GM12878 (cell line): ENCODE measurements at regions of chr16 and their contacts with region 1.

Region 1: DNA sequence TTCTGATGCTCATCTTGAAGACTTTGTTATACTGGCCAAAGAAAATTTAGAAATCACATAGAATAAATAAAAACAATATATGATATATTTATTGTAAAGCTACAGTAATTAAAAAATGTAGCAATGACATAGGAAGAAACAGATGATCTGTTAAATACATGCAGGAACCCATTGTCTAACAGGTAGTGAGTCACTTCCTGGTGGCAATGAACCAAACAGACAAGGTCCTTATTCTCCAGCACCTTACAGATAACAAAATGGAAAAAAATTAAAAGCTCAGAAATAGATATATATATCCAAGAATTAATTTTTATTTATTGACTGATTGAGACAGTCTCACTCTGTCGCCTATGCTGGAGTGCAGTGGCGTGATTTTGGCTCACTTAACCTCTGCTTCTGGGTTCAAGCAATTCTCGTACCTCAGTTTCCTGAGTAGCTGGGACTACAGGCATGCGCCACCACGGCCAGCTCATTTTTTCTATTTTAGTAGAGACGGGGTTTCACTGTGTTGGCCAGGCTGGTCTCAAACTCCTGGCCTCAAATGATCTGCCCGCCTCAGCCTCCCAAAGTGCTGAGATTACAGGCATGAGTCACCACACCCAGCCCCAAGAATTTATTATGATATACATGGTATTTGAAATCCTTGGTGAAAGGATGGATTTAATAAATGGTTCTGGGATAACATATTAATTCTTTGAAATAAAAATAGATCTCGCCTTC is 7.5 kb downstream of the NETO2 start:
- DNase-seq: no peak
- ATAC-seq: peak; percentile 51
- H3K4me3 ChIP-seq: no peak overlapping the region
- H3K27ac ChIP-seq: peak overlapping the region; percentile 32; the same call in 1 of the 2 replicates
- H3K4me1 ChIP-seq: peaks cover 10% of the 10 kb centered on the region
- H3K27me3 ChIP-seq: no peaks in the 10 kb centered on the region
- CTCF ChIP-seq: no peak
- EP300 ChIP-seq: no peak
- POLR2A ChIP-seq: no peak
- RAD21 ChIP-seq: no peak

Region 2: DNA sequence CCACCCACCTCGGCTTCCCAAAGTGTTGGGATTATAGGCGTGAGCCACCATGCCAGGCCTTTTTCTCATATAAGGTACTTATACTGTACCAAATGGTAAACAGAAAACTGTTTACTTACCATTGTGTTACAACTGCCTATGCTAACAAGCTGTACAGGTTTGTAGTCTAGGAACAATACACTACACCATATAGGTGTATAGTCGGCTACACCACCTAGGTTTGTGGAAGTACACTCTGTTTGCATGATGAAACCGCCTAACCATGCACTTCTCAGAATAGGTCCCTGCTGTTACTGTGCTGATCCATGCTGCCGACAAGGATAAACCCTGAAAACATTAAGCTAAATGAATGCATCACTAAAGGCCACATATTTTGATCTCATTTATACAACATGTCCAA is 181.7 kb before region 1 on chr16:
- CTCF ChIA-PET with region 1: interaction called, 20 read pairs
- POLR2A ChIA-PET with region 1: no interaction called
- RAD21 ChIA-PET with region 1: interaction called, 4 read pairs
- SMC1A ChIA-PET with region 1: interaction called, 6 read pairs
- in situ Hi-C with region 1: loop called (anchors 5 kb)
- intact Hi-C with region 1: no loop called
- DNase-seq: no peak
- ATAC-seq: peak; percentile 22; the same call in 2 of the 3 replicates
- H3K4me3 ChIP-seq: no peak overlapping the region
- H3K27ac ChIP-seq: no peak overlapping the region
- H3K4me1 ChIP-seq: no peaks in the 10 kb centered on the region
- H3K27me3 ChIP-seq: no peaks in the 10 kb centered on the region
- CTCF ChIP-seq: no peak
- EP300 ChIP-seq: no peak
- POLR2A ChIP-seq: no peak
- RAD21 ChIP-seq: no peak

Region 3: GRCh38 chr16:47045023-47045422 is 91.2 kb before region 1 on chr16:
- CTCF ChIA-PET with region 1: interaction called, 162 read pairs
- POLR2A ChIA-PET with region 1: interaction called, 7 read pairs
- RAD21 ChIA-PET with region 1: interaction called, 127 read pairs
- SMC1A ChIA-PET with region 1: interaction called, 101 read pairs
- in situ Hi-C with region 1: loop called (anchors 5 kb)
- intact Hi-C with region 1: no loop called
- DNase-seq: no peak
- ATAC-seq: no peak
- H3K4me3 ChIP-seq: no peak overlapping the region
- H3K27ac ChIP-seq: no peak overlapping the region
- H3K4me1 ChIP-seq: peaks cover 22% of the 10 kb centered on the region
- H3K27me3 ChIP-seq: no peaks in the 10 kb centered on the region
- CTCF ChIP-seq: no peak
- EP300 ChIP-seq: no peak
- POLR2A ChIP-seq: no peak
- RAD21 ChIP-seq: no peak

Region 4: DNA sequence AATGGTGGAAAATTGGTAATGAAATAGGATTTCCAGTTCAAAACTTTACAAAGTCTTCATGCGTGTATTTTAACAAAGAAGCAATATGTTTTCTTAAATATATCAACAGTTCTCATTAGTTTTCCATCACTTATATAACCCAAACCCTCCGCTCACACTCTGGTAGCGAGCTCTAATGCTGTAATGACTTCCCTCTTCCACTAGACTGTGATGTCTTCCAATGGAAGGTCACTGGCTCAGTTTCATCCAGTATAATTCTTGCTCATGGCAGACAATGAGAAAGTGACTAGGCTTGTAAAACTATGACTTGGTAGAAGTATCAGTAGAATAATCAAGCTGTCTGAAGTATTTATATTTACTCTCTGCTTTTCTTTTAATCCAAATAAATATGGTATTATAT is 25.3 kb before region 1 on chr16:
- CTCF ChIA-PET with region 1: interaction called, 13 read pairs
- POLR2A ChIA-PET with region 1: interaction called, 7 read pairs
- RAD21 ChIA-PET with region 1: interaction called, 10 read pairs
- SMC1A ChIA-PET with region 1: interaction called, 9 read pairs
- in situ Hi-C with region 1: no loop called
- intact Hi-C with region 1: no loop called
- DNase-seq: no peak
- ATAC-seq: no peak
- H3K4me3 ChIP-seq: no peak overlapping the region
- H3K27ac ChIP-seq: no peak overlapping the region
- H3K4me1 ChIP-seq: no peaks in the 10 kb centered on the region; the same call in 1 of the 2 replicates
- H3K27me3 ChIP-seq: no peaks in the 10 kb centered on the region
- CTCF ChIP-seq: peak in 1 of 3 experiments; percentile 14; a peak in 1 of 6 replicates
- EP300 ChIP-seq: no peak
- POLR2A ChIP-seq: no peak
- RAD21 ChIP-seq: no peak

Region 5: DNA sequence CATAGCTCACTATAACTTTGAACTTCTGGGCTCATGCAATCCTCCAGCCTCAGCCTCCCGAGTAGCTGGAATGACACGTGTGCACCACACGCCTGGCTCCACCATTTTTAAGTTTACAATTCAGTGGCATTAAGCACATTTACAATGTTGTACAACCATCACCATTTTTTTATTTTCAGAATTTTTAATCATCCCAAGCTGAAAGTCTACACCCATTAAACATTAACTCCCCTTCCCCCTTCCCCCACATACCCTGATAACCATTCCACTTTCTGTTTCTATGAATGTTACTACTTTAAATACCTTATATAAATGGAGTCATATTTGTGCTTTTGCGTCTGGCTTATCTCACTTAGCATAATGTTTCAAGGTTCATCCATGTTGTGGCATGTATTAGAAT is 10.5 kb before region 1 on chr16:
- CTCF ChIA-PET with region 1: interaction called, 52 read pairs
- POLR2A ChIA-PET with region 1: interaction called, 5 read pairs
- RAD21 ChIA-PET with region 1: interaction called, 21 read pairs
- SMC1A ChIA-PET with region 1: interaction called, 19 read pairs
- in situ Hi-C with region 1: no loop called
- intact Hi-C with region 1: no loop called
- DNase-seq: no peak
- ATAC-seq: no peak
- H3K4me3 ChIP-seq: no peak overlapping the region
- H3K27ac ChIP-seq: no peak overlapping the region
- H3K4me1 ChIP-seq: no peaks in the 10 kb centered on the region
- H3K27me3 ChIP-seq: no peaks in the 10 kb centered on the region
- CTCF ChIP-seq: no peak
- EP300 ChIP-seq: no peak
- POLR2A ChIP-seq: no peak
- RAD21 ChIP-seq: no peak

Region 6: GRCh38 chr16:48164907-48165726 is 1028.9 kb after region 1 on chr16:
- CTCF ChIA-PET with region 1: interaction called, 28 read pairs
- POLR2A ChIA-PET with region 1: no interaction called
- RAD21 ChIA-PET with region 1: interaction called, 47 read pairs
- SMC1A ChIA-PET with region 1: interaction called, 3 read pairs
- in situ Hi-C with region 1: loop called (anchors 5 kb)
- intact Hi-C with region 1: no loop called
- DNase-seq: no peak
- ATAC-seq: peak; percentile 98
- H3K4me3 ChIP-seq: no peak overlapping the region
- H3K27ac ChIP-seq: no peak overlapping the region
- H3K4me1 ChIP-seq: peaks cover 8% of the 10 kb centered on the region; the same call in 1 of the 2 replicates
- H3K27me3 ChIP-seq: no peaks in the 10 kb centered on the region
- CTCF ChIP-seq: peak; percentile 88 to 94 (median 90)
- EP300 ChIP-seq: no peak
- POLR2A ChIP-seq: no peak
- RAD21 ChIP-seq: peak; percentile 93